ENCODE measurements at regions of chr1 and their contacts with region 1.

Region 1: GRCh38 chr1:234309598-234310459 is 63.4 kb upstream of the COA6 start:
- DNase-seq: peak; percentile 87
- CTCF ChIP-seq: peak; percentile 93

Region 2: GRCh38 chr1:234114648-234115307 is 195.1 kb before region 1 on chr1:
- CTCF ChIA-PET with region 1: interaction called, 33 read pairs
- POLR2A ChIA-PET with region 1: no interaction called
- DNase-seq: peak; percentile 52
- CTCF ChIP-seq: peak; percentile 63

Region 3: DNA sequence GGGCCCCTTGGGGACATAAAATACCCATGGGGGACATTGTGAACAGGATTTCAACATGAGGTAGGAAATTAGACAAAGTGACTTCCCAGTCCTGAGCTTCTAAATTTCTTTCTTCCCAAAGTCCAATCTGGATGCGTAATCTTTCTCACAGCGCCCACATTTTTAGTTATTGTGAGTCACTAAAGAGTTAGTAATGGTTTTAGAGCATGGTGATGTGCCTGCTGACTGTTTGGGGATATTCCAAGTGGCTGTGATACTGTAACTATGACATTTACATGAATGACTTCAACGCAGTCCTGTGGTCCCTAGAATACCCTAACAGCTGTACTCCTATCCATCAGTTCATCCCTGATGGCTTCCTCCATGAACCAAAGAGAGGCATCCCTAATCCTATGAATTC is 160.6 kb before region 1 on chr1:
- CTCF ChIA-PET with region 1: interaction called, 19 read pairs
- POLR2A ChIA-PET with region 1: no interaction called
- DNase-seq: no peak
- CTCF ChIP-seq: no peak

Region 4: GRCh38 chr1:234163267-234163919 is 146.4 kb before region 1 on chr1:
- CTCF ChIA-PET with region 1: interaction called, 10 read pairs
- POLR2A ChIA-PET with region 1: no interaction called
- DNase-seq: no peak
- CTCF ChIP-seq: no peak

Region 5: DNA sequence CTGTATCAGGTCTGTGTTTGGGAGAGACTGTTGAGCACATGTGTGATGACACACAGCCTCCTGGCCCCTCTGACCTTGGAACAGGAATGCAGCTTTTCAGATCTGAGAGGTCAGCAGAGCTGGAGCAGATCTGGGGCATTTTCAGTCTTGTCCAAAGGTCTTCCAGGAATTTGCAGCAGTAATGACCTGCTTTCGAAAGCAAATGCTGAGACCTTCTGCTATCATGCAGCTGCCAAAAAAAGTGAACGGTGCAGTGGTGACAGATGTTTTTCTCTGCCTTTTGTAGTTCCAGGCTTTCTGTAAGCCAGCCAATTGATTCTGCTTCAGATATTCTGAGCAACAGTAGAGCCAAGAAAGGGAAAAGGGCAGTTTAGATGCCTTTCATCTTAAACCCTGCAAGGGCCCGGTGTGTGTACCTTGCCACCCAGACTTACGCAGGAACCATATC is 74.4 kb before region 1 on chr1:
- CTCF ChIA-PET with region 1: interaction called, 13 read pairs
- POLR2A ChIA-PET with region 1: no interaction called
- DNase-seq: no peak
- CTCF ChIP-seq: no peak

Region 6: DNA sequence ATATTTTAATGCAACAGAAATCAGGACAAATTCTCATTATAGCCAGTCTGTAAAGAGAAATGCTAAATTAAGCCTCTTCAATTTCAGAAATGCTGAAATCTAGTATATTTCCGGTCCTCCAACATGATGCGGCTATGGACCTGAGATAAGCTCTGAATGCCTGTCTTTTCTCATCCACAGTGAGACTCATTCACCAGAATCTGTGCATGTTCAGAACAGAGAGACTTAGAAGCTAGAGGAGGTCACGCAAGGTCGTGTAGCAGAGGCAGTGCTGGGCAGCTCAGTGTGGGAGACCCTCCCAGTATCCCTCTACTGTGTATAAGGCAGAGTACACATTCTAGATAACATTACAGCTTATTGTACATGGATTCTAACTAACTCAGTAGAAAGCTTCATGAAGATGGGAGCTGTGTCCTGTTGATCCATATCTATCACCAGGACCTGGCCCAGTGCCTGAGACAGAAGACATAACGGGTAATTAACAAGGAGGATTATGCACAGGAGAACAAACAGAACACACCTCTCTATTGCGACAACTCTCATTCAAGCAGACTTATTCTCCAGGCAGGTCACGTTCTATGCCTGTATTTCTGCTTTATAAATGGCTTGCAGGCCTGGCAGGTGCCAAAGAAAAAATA is 33.6 kb before region 1 on chr1:
- CTCF ChIA-PET with region 1: interaction called, 11 read pairs
- POLR2A ChIA-PET with region 1: no interaction called
- DNase-seq: no peak
- CTCF ChIP-seq: no peak

Region 7: GRCh38 chr1:234292011-234292410 is 17.8 kb before region 1 on chr1:
- CTCF ChIA-PET with region 1: interaction called, 60 read pairs
- POLR2A ChIA-PET with region 1: no interaction called
- DNase-seq: no peak
- CTCF ChIP-seq: no peak